ENCODE measurements at regions of chr6 and their contacts with region 1.

Region 1: GRCh38 chr6:15901141-15902115 is 227.5 kb upstream of the MYLIP start:
- DNase-seq: peak; percentile 99
- ATAC-seq: peak; percentile 90
- H3K4me3 ChIP-seq: no peak overlapping the region; the same call in 1 of the 2 replicates
- H3K27ac ChIP-seq: peak overlapping the region; percentile 96
- H3K4me1 ChIP-seq: peaks cover 60% of the 10 kb centered on the region
- H3K27me3 ChIP-seq: no peaks in the 10 kb centered on the region
- CTCF ChIP-seq: peak in 1 of 3 experiments; percentile 17; a peak in 1 of 6 replicates
- EP300 ChIP-seq: peak; percentile 97 to 99
- POLR2A ChIP-seq: no peak
- RAD21 ChIP-seq: peak; percentile 35; the same call in 1 of the 2 replicates

Region 2: GRCh38 chr6:15479761-15480160 is 421.7 kb before region 1 on chr6:
- CTCF ChIA-PET with region 1: no interaction called
- POLR2A ChIA-PET with region 1: no interaction called
- RAD21 ChIA-PET with region 1: no interaction called
- SMC1A ChIA-PET with region 1: no interaction called
- in situ Hi-C with region 1: no loop called
- intact Hi-C with region 1: no loop called
- DNase-seq: no peak
- ATAC-seq: no peak
- H3K4me3 ChIP-seq: no peak overlapping the region
- H3K27ac ChIP-seq: no peak overlapping the region
- H3K4me1 ChIP-seq: no peaks in the 10 kb centered on the region
- H3K27me3 ChIP-seq: no peaks in the 10 kb centered on the region
- CTCF ChIP-seq: no peak
- EP300 ChIP-seq: no peak
- POLR2A ChIP-seq: no peak
- RAD21 ChIP-seq: no peak

Region 3: DNA sequence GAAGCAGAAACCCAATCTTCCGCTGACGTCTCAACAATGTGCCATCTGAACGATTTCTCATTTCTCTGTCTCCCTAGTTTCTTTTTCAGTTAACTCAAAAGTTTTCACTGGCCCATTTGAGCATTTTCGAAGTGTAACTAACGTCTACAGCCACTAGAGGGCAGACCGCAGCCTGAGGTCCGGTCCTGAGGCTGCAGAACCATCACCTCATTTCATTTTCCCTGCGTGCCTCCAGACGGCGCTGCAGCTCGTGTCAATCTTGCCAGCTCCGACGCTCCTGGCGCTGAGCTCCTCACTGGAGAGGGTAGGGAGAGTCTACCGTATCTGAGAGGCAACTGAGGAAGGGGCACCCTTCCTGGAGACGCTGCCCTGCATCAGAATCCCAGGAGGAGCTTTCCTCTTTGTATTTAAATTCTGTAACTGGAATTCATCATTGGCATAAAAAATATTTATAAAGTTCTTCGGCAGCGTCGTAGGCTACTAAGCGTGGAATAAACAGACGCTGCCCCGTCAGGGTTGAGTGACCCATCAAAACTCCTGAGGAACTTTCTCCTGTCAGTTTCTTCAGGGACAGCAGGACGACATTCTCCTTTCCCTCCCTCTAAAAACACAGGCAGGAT is 210.1 kb before region 1 on chr6:
- CTCF ChIA-PET with region 1: interaction called, 35 read pairs
- POLR2A ChIA-PET with region 1: interaction called, 5 read pairs
- RAD21 ChIA-PET with region 1: interaction called, 68 read pairs
- SMC1A ChIA-PET with region 1: interaction called, 60 read pairs
- in situ Hi-C with region 1: no loop called
- intact Hi-C with region 1: loop called (anchors 2 kb)
- DNase-seq: peak; percentile 74
- ATAC-seq: peak; percentile 98
- H3K4me3 ChIP-seq: no peak overlapping the region
- H3K27ac ChIP-seq: no peak overlapping the region
- H3K4me1 ChIP-seq: no peaks in the 10 kb centered on the region; the same call in 1 of the 2 replicates
- H3K27me3 ChIP-seq: no peaks in the 10 kb centered on the region
- CTCF ChIP-seq: peak; percentile 100; a peak in 5 of 6 replicates
- EP300 ChIP-seq: 0 out of 4 replicates have a peak, but pooled peaks of 1 of the 2 experiments have one; percentile 8
- POLR2A ChIP-seq: no peak
- RAD21 ChIP-seq: peak; percentile 100

Region 4: DNA sequence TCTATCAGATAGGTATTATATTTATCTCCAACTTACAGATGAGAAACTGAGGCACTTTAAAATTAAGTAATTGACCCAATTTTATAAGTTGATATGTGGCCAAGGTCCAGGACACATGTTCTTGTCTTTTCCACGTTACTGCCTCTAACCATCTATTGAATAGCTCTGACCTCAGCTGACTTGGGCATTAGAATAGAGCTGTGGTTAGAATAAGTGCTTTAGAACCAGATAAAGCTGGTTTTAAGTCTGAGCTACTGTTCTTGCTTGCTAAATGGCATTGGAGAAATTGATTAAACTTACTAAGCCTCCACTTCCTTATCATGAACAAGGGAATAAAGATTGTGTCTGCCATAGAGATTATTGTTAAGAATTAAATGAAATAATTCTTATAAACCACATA is 90.8 kb before region 1 on chr6:
- CTCF ChIA-PET with region 1: no interaction called
- POLR2A ChIA-PET with region 1: interaction called, 4 read pairs
- RAD21 ChIA-PET with region 1: interaction called, 10 read pairs
- SMC1A ChIA-PET with region 1: interaction called, 7 read pairs
- in situ Hi-C with region 1: no loop called
- intact Hi-C with region 1: no loop called
- DNase-seq: no peak
- ATAC-seq: no peak
- H3K4me3 ChIP-seq: no peak overlapping the region
- H3K27ac ChIP-seq: no peak overlapping the region
- H3K4me1 ChIP-seq: no peaks in the 10 kb centered on the region
- H3K27me3 ChIP-seq: no peaks in the 10 kb centered on the region
- CTCF ChIP-seq: no peak
- EP300 ChIP-seq: no peak
- POLR2A ChIP-seq: no peak
- RAD21 ChIP-seq: no peak

Region 5: DNA sequence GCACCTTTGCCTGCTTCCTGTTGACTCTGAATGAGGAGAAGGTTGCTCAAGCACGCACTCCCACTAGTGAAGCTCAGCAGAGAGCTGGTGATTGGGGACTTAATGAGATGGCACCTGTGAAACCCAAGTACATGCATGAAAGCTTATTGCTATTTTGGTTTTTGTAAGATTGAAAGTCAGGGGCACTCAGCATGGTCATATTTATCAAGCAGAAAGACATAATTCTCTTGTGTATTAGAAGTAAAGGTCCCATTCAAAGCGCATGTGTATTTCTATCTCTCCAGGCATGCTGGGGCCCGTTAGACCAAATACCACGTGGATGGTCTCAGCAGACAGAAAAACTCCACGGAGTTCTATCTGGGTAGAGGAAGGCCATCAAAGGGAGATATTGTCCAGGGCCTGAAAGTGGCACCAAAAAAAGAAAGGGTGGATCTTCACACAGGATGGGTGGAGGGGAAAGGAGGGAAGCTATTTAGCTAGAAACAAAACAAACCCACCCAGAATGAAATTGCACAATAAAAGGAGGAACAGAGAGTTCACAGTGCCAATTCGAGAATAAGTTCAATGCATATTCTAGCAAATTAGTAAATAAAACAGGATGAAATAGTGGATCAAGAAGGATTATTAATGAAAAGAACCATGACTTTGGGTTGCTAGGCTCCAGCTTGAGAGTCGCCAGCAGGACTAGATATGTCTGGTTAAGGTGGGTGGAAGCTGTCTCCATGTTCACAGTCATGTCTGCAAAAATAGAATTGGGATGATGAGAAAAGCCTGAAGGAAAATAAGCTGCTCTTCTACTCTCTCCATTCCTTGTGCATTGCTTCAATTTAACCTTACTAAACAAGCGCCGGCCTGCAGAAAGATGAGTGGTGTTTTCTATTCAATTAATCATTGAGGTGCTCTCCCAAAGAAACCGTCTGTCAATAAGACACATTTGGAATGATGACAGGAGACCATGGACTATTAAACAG is 13.7 kb before region 1 on chr6:
- CTCF ChIA-PET with region 1: interaction called, 16 read pairs
- POLR2A ChIA-PET with region 1: interaction called, 13 read pairs
- RAD21 ChIA-PET with region 1: interaction called, 31 read pairs
- SMC1A ChIA-PET with region 1: interaction called, 73 read pairs
- in situ Hi-C with region 1: no loop called
- intact Hi-C with region 1: no loop called
- DNase-seq: no peak
- ATAC-seq: peak; percentile 90
- H3K4me3 ChIP-seq: no peak overlapping the region
- H3K27ac ChIP-seq: no peak overlapping the region
- H3K4me1 ChIP-seq: peaks cover 10% of the 10 kb centered on the region; the same call in 1 of the 2 replicates
- H3K27me3 ChIP-seq: no peaks in the 10 kb centered on the region
- CTCF ChIP-seq: no peak
- EP300 ChIP-seq: no peak; a peak in 1 of 4 replicates
- POLR2A ChIP-seq: no peak
- RAD21 ChIP-seq: no peak

Region 6: DNA sequence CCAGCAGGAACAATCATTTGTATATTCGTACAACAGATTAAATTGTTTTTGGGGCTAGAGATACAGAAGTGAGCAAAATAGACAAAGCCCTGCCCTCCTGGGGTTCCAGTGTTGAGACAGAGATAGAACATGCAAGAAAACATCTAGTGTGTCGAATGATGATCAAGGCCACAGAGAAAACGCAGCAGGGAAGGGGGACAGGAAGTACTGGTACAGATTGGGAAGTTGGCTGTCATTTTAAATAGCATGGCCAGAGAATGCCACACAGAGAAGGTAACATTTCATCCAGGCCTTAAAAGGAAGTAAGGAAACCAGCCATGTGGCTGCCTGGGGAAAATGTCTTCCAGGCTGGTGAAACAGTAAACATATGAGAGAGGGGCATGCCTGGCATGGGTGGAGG is 24.8 kb after region 1 on chr6:
- CTCF ChIA-PET with region 1: no interaction called
- POLR2A ChIA-PET with region 1: no interaction called
- RAD21 ChIA-PET with region 1: no interaction called
- SMC1A ChIA-PET with region 1: no interaction called
- in situ Hi-C with region 1: no loop called
- intact Hi-C with region 1: no loop called
- DNase-seq: no peak
- ATAC-seq: no peak
- H3K4me3 ChIP-seq: no peak overlapping the region
- H3K27ac ChIP-seq: no peak overlapping the region
- H3K4me1 ChIP-seq: no peaks in the 10 kb centered on the region
- H3K27me3 ChIP-seq: no peaks in the 10 kb centered on the region
- CTCF ChIP-seq: no peak
- EP300 ChIP-seq: no peak
- POLR2A ChIP-seq: no peak
- RAD21 ChIP-seq: no peak

Region 7: GRCh38 chr6:15955944-15956735 is 54.7 kb after region 1 on chr6:
- CTCF ChIA-PET with region 1: interaction called, 10 read pairs
- POLR2A ChIA-PET with region 1: interaction called, 5 read pairs
- RAD21 ChIA-PET with region 1: interaction called, 60 read pairs
- SMC1A ChIA-PET with region 1: interaction called, 88 read pairs
- in situ Hi-C with region 1: no loop called
- intact Hi-C with region 1: loop called (anchors 2 kb)
- DNase-seq: no peak
- ATAC-seq: no peak
- H3K4me3 ChIP-seq: no peak overlapping the region
- H3K27ac ChIP-seq: no peak overlapping the region
- H3K4me1 ChIP-seq: peaks cover 28% of the 10 kb centered on the region
- H3K27me3 ChIP-seq: no peaks in the 10 kb centered on the region
- CTCF ChIP-seq: no peak
- EP300 ChIP-seq: no peak
- POLR2A ChIP-seq: no peak
- RAD21 ChIP-seq: no peak

Region 8: GRCh38 chr6:16092140-16092539 is 190.7 kb after region 1 on chr6:
- CTCF ChIA-PET with region 1: interaction called, 4 read pairs
- POLR2A ChIA-PET with region 1: no interaction called
- RAD21 ChIA-PET with region 1: interaction called, 13 read pairs
- SMC1A ChIA-PET with region 1: interaction called, 10 read pairs
- in situ Hi-C with region 1: no loop called
- intact Hi-C with region 1: no loop called
- DNase-seq: no peak
- ATAC-seq: no peak
- H3K4me3 ChIP-seq: no peak overlapping the region
- H3K27ac ChIP-seq: no peak overlapping the region
- H3K4me1 ChIP-seq: no peaks in the 10 kb centered on the region
- H3K27me3 ChIP-seq: no peaks in the 10 kb centered on the region
- CTCF ChIP-seq: no peak
- EP300 ChIP-seq: no peak
- POLR2A ChIP-seq: no peak
- RAD21 ChIP-seq: no peak

Region 9: GRCh38 chr6:16206595-16207037 is 305.2 kb after region 1 on chr6:
- CTCF ChIA-PET with region 1: interaction called, 19 read pairs
- POLR2A ChIA-PET with region 1: no interaction called
- RAD21 ChIA-PET with region 1: interaction called, 34 read pairs
- SMC1A ChIA-PET with region 1: interaction called, 13 read pairs
- in situ Hi-C with region 1: no loop called
- intact Hi-C with region 1: no loop called
- DNase-seq: no peak
- ATAC-seq: peak; percentile 57
- H3K4me3 ChIP-seq: no peak overlapping the region
- H3K27ac ChIP-seq: no peak overlapping the region
- H3K4me1 ChIP-seq: peaks cover 16% of the 10 kb centered on the region
- H3K27me3 ChIP-seq: peaks cover 0 to 3% of the 10 kb centered on the region in 2 experiments; a peak in 1 of 4 replicates
- CTCF ChIP-seq: peak; percentile 86 to 95 (median 93)
- EP300 ChIP-seq: no peak
- POLR2A ChIP-seq: no peak
- RAD21 ChIP-seq: peak; percentile 96

Measured in GM12878 (cell line).